CD4-positive, alpha-beta memory T cell (primary cell): ENCODE measurements at regions of chr16 and their contacts with region 1.

Region 1: GRCh38 chr16:12079412-12079965 is 103.0 kb downstream of the SNX29 start:
- DNase-seq: peak in 4 of 5 donors; percentile 17 to 49 (median 43)
- H3K4me3 ChIP-seq: peak overlapping the region; percentile 2 to 6
- H3K4me3 Mint-ChIP-seq: peak overlapping the region; percentile 71 to 91 (median 84)
- H3K27ac ChIP-seq: peak overlapping the region; percentile 58
- H3K27ac Mint-ChIP-seq: peak overlapping the region; percentile 91 to 99 (median 97)
- H3K4me1 ChIP-seq: peaks cover 71% of the 10 kb centered on the region
- H3K4me1 Mint-ChIP-seq: peaks cover 51 to 89% (median 67%) of the 10 kb centered on the region in 4 donors
- H3K27me3 ChIP-seq: no peaks in the 10 kb centered on the region
- H3K27me3 Mint-ChIP-seq: no peaks in the 10 kb centered on the region

Region 2: DNA sequence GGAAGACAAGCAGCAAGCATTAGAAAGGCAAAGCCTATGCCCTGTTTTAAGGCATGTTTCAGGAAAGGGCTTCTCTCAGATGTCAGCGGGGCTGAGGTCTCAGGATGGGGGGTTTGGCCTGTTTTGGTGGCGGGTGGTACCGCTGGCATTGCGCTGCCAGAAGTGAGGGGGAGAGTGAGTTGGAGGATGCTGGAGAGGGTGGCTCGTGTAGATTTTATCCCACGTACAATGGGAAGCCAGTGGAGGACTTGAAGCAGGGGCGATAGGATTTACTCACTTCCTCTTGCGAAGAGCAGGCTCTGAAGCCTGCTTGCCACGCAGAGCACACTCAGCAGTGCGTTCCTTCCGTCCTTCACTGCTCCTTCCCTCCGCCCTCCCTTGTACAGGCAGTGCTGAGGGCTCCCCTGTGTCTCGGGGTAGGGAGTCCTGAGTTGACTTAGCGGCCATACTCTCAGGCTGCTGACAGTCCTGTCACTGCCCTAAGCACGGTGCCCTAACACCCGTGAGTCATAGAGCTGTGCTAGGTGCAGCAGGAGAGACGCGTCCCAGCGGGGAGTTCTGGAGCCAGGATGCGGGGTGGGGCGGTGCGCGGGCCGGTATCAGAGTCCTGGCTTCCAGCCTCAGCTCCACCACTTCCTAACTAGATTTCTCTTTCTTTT is 10.1 kb after region 1 on chr16:
- CTCF ChIA-PET with region 1: interaction called, 131 read pairs
- POLR2A ChIA-PET with region 1: interaction called, 16 read pairs
- intact Hi-C with region 1: loop called (anchors 2 kb)
- DNase-seq: peak in 3 of 5 donors; percentile 25 to 38 (median 38)
- H3K4me3 ChIP-seq: peak overlapping the region; percentile 29 to 32
- H3K4me3 Mint-ChIP-seq: peak overlapping the region; percentile 74 to 89 (median 80)
- H3K27ac ChIP-seq: peak overlapping the region; percentile 0
- H3K27ac Mint-ChIP-seq: peak overlapping the region; percentile 60 to 98 (median 92)
- H3K4me1 ChIP-seq: peaks cover 24% of the 10 kb centered on the region
- H3K4me1 Mint-ChIP-seq: peaks cover 20 to 34% (median 26%) of the 10 kb centered on the region in 4 donors
- H3K27me3 ChIP-seq: no peaks in the 10 kb centered on the region
- H3K27me3 Mint-ChIP-seq: no peaks in the 10 kb centered on the region

Region 3: GRCh38 chr16:12803203-12804097 is 724.0 kb after region 1 on chr16 and contains the start of gene CPPED1:
- CTCF ChIA-PET with region 1: no interaction called
- POLR2A ChIA-PET with region 1: interaction called, 8 read pairs
- intact Hi-C with region 1: loop called (anchors 5 kb)
- DNase-seq: peak; percentile 88 to 95 (median 91)
- H3K4me3 ChIP-seq: peak within 1 kb of the TSS; percentile 68 to 83
- H3K4me3 Mint-ChIP-seq: peak within 1 kb of the TSS; percentile 91 to 97 (median 94)
- H3K27ac ChIP-seq: peak within 1 kb of the TSS; percentile 68
- H3K27ac Mint-ChIP-seq: peak within 1 kb of the TSS; percentile 90 to 97 (median 95)
- H3K4me1 ChIP-seq: peaks cover 18% of the 10 kb centered on the region
- H3K4me1 Mint-ChIP-seq: peaks cover 15 to 36% (median 20%) of the 10 kb centered on the region in 4 donors
- H3K27me3 ChIP-seq: no peaks in the 10 kb centered on the region
- H3K27me3 Mint-ChIP-seq: peaks cover 0 to 2% of the 10 kb centered on the region in 2 donors
- total RNA-seq, gene CPPED1: 7.6 to 7.9 TPM

Region 4: DNA sequence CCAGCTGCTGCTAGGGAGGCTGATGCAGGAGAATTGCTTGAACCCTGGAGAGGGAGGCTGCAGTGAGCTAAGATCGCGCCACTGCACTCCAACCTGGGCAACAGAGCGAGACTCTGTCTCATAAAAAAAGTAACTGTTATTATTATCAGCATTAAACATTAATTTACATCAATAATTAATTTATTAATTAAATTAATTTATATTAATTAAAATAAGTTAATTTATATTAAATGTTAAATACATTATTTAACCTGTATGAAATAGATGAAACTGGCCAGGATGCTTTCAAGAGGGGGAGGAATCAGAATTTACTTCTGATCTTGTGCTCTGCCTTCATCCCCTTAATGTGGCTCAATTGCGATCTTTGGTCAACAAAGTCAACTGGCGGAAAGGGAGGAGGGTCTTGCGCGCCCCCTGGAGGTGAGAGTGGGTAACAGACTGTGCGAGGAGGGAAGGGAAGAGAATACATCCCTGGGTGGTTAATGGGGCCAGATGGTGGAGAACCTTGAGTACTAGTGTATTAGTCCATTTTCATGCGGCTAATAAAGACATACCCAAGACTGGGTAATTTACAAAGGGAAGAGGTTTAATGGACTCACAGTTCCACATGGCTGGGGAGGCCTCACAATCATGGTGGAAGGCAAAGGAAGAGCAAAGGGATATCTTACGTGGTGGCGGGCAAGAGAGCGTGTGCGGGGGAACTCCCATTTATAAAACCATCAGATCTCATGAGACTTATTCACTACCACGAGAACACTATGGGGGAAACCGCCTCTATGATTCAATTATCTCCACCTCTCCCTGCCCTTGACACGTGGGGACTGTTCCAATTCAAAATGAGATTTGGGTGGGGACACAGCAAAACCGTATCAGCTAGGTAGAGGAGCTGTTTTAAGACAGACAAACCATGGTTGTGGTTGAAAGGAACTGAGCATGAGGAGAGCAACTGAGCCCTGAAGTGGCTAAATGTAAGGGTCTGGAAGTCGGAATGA is 739.9 kb after region 1 on chr16:
- CTCF ChIA-PET with region 1: interaction called, 3 read pairs
- POLR2A ChIA-PET with region 1: no interaction called
- intact Hi-C with region 1: loop called (anchors 5 kb)
- DNase-seq: peak; percentile 51 to 67 (median 62)
- H3K4me3 ChIP-seq: no peak overlapping the region
- H3K4me3 Mint-ChIP-seq: no peak overlapping the region
- H3K27ac ChIP-seq: no peak overlapping the region
- H3K27ac Mint-ChIP-seq: no peak overlapping the region
- H3K4me1 ChIP-seq: no peaks in the 10 kb centered on the region
- H3K4me1 Mint-ChIP-seq: peaks cover 3 to 5% (median 3%) of the 10 kb centered on the region in 4 donors
- H3K27me3 ChIP-seq: no peaks in the 10 kb centered on the region
- H3K27me3 Mint-ChIP-seq: peaks cover 2 to 5% of the 10 kb centered on the region in 2 donors